ENCODE measurements at regions of chr2 and their contacts with region 1.

Region 1: GRCh38 chr2:190843874-190844699 is 36.5 kb upstream of the GLS start:
- DNase-seq: peak; percentile 95
- ATAC-seq: peak; percentile 76
- H3K4me3 ChIP-seq: peak overlapping the region; percentile 61
- H3K27ac ChIP-seq: peak overlapping the region; percentile 99
- H3K4me1 ChIP-seq: peaks cover 89% of the 10 kb centered on the region
- H3K27me3 ChIP-seq: no peaks in the 10 kb centered on the region
- CTCF ChIP-seq: no peak

Region 2: GRCh38 chr2:190804182-190804795 is 39.8 kb before region 1 on chr2:
- CTCF ChIA-PET with region 1: no interaction called
- POLR2A ChIA-PET with region 1: no interaction called
- intact Hi-C with region 1: loop called (anchors 5 kb)
- DNase-seq: peak; percentile 69
- ATAC-seq: no peak
- H3K4me3 ChIP-seq: no peak overlapping the region
- H3K27ac ChIP-seq: no peak overlapping the region
- H3K4me1 ChIP-seq: peaks cover 4% of the 10 kb centered on the region
- H3K27me3 ChIP-seq: no peaks in the 10 kb centered on the region
- CTCF ChIP-seq: peak; percentile 79

Region 3: DNA sequence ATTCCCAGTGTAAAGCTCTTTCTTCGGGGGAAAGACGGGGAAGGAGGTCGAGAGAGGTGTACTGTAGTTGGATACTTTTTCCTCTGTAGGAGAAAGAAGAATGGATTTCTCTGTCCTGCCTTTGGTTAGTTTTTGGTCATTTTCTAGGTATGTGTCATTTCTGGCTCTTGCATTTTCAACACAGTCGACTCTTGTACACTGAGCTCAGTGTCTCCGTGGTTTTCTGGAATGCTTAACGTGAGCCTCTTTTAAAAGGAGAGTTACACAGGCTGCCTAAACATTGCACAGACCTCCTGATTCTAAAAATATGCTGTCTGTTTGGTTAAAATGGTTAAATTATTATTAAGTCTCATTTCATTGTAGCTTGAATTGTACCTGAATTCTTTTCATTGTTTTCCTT is 14.7 kb after region 1 on chr2:
- CTCF ChIA-PET with region 1: no interaction called
- POLR2A ChIA-PET with region 1: interaction called, 16 read pairs
- intact Hi-C with region 1: no loop called
- DNase-seq: peak; percentile 70
- ATAC-seq: peak; percentile 93
- H3K4me3 ChIP-seq: no peak overlapping the region
- H3K27ac ChIP-seq: peak overlapping the region; percentile 10; the same call in 1 of the 2 replicates
- H3K4me1 ChIP-seq: peaks cover 18% of the 10 kb centered on the region
- H3K27me3 ChIP-seq: no peaks in the 10 kb centered on the region
- CTCF ChIP-seq: no peak

Measured in PC-3 (cell line).